Thyroid gland (tissue), 4 donors: ENCODE measurements at regions of chr2 and their contacts with region 1.

Region 1: GRCh38 chr2:209977386-209978239 is 24.8 kb upstream of the RPE start:
- DNase-seq: no peak
- H3K4me3 ChIP-seq: no peak overlapping the region
- H3K27ac ChIP-seq: no peak overlapping the region
- H3K4me1 ChIP-seq: no peaks in the 10 kb centered on the region
- H3K27me3 ChIP-seq: no peaks in the 10 kb centered on the region
- CTCF ChIP-seq: peak in 5 of 6 experiments; percentile 32 to 76 (median 59)
- POLR2A ChIP-seq: no peak

Region 2: GRCh38 chr2:209451209-209451834 is 526.3 kb before region 1 on chr2:
- intact Hi-C with region 1: no loop called
- DNase-seq: no peak
- H3K4me3 ChIP-seq: no peak overlapping the region
- H3K27ac ChIP-seq: no peak overlapping the region
- H3K4me1 ChIP-seq: no peaks in the 10 kb centered on the region
- H3K27me3 ChIP-seq: no peaks in the 10 kb centered on the region
- CTCF ChIP-seq: no peak
- POLR2A ChIP-seq: no peak

Region 3: DNA sequence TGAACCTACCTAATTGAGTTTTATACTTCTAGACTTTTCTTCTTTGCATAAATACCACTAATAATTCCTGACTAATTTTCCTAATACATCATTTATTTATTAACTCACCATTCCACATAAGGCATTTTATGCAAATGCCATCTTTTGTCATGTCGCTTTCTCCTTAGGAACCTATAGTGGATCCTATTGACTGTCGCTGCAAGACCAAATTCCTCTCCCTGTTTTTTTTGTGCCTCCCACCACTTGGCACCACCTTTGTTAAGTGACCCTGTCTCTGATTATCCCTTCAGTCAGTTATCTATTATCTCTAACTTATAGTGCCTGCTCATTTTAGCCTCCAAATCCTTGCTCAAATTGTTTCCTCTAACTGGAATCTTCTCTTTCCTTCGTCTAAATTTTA is 186.5 kb before region 1 on chr2:
- intact Hi-C with region 1: no loop called
- DNase-seq: no peak
- H3K4me3 ChIP-seq: no peak overlapping the region
- H3K27ac ChIP-seq: no peak overlapping the region
- H3K4me1 ChIP-seq: no peaks in the 10 kb centered on the region
- H3K27me3 ChIP-seq: no peaks in the 10 kb centered on the region
- CTCF ChIP-seq: no peak
- POLR2A ChIP-seq: no peak

Region 4: GRCh38 chr2:209821806-209822205 is 155.8 kb before region 1 on chr2:
- intact Hi-C with region 1: no loop called
- DNase-seq: no peak
- H3K4me3 ChIP-seq: no peak overlapping the region
- H3K27ac ChIP-seq: no peak overlapping the region
- H3K4me1 ChIP-seq: no peaks in the 10 kb centered on the region
- H3K27me3 ChIP-seq: no peaks in the 10 kb centered on the region
- CTCF ChIP-seq: no peak
- POLR2A ChIP-seq: no peak

Region 5: GRCh38 chr2:210195101-210195852 is 217.7 kb after region 1 on chr2:
- intact Hi-C with region 1: loop called (anchors 5 kb)
- DNase-seq: no peak
- H3K4me3 ChIP-seq: no peak overlapping the region
- H3K27ac ChIP-seq: no peak overlapping the region
- H3K4me1 ChIP-seq: peaks cover 17 to 19% of the 10 kb centered on the region in 2 donors
- H3K27me3 ChIP-seq: no peaks in the 10 kb centered on the region
- CTCF ChIP-seq: peak; percentile 34 to 72 (median 58)
- POLR2A ChIP-seq: no peak

Region 6: GRCh38 chr2:210399440-210400041 is 421.9 kb after region 1 on chr2:
- intact Hi-C with region 1: loop called (anchors 10 kb)
- DNase-seq: no peak
- H3K4me3 ChIP-seq: no peak overlapping the region
- H3K27ac ChIP-seq: no peak overlapping the region
- H3K4me1 ChIP-seq: no peaks in the 10 kb centered on the region
- H3K27me3 ChIP-seq: no peaks in the 10 kb centered on the region
- CTCF ChIP-seq: peak in 4 of 6 experiments; percentile 12 to 64 (median 54)
- POLR2A ChIP-seq: no peak